Activated naive CD4-positive, alpha-beta T cell treated with anti-CD3 and anti-CD28 coated beads for 36 hours (primary cell): ENCODE measurements at regions of chr12 and their contacts with region 1.

Region 1: GRCh38 chr12:27179400-27180214 is 64.5 kb upstream of the STK38L start:
- DNase-seq: peak; percentile 69
- H3K4me3 Mint-ChIP-seq: no peak overlapping the region
- H3K27ac Mint-ChIP-seq: peak overlapping the region; percentile 76
- H3K4me1 Mint-ChIP-seq: peaks cover 38% of the 10 kb centered on the region
- H3K27me3 Mint-ChIP-seq: peaks cover 2% of the 10 kb centered on the region

Region 2: DNA sequence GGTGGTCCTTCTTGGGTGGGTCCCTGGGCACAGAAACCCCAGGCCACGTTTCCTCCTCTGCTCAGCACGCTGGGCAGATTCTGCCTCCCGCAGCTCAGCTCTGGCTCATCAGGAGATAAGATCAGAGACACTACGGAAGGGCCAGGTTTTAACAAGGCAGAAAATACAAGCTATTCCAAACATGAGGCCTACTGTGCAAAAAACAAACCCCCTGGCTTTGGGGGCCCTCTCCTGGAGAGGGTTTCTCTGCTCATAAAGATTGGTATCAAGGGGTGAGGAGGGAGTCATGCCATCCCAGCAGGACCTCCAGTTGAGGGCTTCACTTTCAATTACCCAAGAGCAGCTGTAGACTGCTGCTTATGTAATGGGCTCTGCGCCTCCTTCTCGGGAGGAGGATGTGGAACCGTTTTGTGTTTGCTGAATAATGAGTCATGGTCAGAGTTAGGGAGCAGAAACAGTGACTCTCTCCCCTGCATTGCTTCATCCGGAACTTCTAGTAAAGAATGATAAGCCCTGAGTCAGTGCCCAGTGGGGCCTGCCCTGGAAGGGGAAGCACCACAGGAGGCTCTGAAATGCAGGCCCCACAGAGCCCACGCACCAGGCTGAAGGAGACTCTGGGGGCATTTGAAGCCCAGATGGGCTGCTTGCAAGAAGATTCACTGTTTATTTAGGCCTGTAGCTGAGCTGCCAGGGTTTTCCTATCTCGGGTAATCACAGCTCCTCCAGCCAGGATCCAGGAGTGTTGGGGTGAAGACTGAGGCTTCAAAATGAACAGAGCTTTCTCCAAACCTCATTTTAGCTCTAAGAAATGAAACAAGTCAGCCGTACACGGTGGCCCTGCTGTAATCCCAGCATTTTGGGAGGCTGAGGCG is 904.9 kb before region 1 on chr12:
- CTCF ChIA-PET with region 1: no interaction called
- intact Hi-C with region 1: loop called (anchors 10 kb)
- DNase-seq: peak; percentile 76
- H3K4me3 Mint-ChIP-seq: no peak overlapping the region
- H3K27ac Mint-ChIP-seq: no peak overlapping the region
- H3K4me1 Mint-ChIP-seq: peaks cover 8% of the 10 kb centered on the region
- H3K27me3 Mint-ChIP-seq: no peaks in the 10 kb centered on the region

Region 3: DNA sequence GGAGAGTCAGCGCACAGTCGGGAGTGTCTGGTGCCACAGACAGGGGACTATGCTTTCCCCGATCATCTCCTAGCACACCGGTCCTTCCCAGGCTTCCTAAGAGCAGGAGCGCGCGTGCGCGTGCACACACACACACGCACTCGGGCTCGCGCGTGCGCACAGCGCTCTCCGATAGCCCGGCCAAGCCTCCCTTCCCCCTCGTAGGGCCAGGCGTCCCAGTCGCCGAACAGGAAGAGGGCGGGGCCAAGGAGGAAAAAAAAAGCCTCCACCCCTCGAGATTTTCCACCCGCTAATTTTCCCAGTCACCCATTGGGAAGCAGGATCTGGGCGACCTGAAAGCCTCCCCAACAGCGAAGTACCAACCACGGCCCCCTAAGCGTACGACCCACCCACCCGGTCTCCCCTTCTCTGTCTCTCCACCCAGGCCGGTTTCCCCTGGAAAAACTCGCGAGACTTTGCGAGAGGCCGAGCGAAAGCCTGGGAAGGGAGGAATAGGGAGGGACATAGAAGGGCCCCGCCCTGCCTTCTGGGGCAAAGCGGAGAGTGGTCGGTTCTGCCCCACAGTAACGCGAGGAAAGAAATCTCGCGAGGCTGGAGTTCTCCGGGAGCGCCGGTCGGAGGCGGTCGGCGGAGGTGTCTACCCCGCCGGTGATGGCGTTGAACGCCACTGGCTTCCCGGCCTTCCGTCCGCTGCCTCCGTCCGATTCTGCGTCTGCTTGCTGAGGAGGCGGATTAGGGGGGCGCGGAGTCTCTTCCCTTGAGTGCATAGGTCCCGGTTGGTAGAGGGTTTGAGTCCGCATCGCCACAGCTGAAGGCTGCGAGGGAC is 241.5 kb before region 1 on chr12 and contains the starts of genes FGFR1OP2 and INTS13:
- CTCF ChIA-PET with region 1: no interaction called
- intact Hi-C with region 1: loop called (anchors 1 kb)
- DNase-seq: peak; percentile 99
- H3K4me3 Mint-ChIP-seq: peak within 1 kb of the TSS; percentile 93
- H3K27ac Mint-ChIP-seq: peak within 1 kb of the TSS; percentile 98
- H3K4me1 Mint-ChIP-seq: peaks cover 52% of the 10 kb centered on the region
- H3K27me3 Mint-ChIP-seq: no peaks in the 10 kb centered on the region
- total RNA-seq, gene FGFR1OP2: 37.0 to 38.4 TPM
- total RNA-seq, gene INTS13: 39.6 to 42.0 TPM

Region 4: DNA sequence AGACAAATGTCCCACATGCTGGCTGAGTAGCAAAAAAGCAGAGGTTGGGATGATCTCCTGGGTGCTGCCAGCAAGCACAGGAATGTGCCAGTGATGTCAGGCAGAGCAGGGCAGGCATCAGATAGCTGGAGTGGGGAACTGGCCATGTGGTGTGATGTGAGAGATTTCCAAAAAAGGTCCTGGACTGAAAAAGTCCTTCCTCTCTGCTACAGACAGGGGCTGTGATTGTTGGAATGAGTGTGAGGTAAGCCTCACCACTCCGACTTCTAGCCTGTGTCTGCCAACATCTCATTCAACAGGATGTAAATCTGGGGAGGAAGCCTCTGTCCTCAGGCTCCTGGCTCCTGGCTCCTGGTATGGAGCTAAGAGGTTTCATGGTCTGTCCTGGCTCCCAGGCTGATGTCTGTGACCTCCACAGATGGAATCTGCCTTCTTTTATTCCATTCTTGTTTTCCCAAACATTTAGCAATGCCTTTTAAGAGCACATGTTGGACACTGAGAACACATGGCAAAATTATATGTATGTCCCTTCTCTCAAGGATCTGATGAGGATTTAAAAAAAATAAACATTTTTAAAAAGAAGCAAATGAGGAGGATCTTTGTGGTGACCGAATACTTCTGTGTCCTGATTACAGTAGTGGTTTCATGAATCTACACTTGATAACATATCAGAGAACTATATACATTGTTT is 14.4 kb after region 1 on chr12:
- CTCF ChIA-PET with region 1: no interaction called
- intact Hi-C with region 1: no loop called
- DNase-seq: no peak
- H3K4me3 Mint-ChIP-seq: no peak overlapping the region
- H3K27ac Mint-ChIP-seq: no peak overlapping the region
- H3K4me1 Mint-ChIP-seq: no peaks in the 10 kb centered on the region
- H3K27me3 Mint-ChIP-seq: no peaks in the 10 kb centered on the region

Region 5: GRCh38 chr12:27207615-27208413 is 28.2 kb after region 1 on chr12:
- CTCF ChIA-PET with region 1: interaction called, 4 read pairs
- intact Hi-C with region 1: loop called (anchors 1 kb)
- DNase-seq: peak; percentile 74
- H3K4me3 Mint-ChIP-seq: no peak overlapping the region
- H3K27ac Mint-ChIP-seq: peak overlapping the region; percentile 38
- H3K4me1 Mint-ChIP-seq: peaks cover 19% of the 10 kb centered on the region
- H3K27me3 Mint-ChIP-seq: no peaks in the 10 kb centered on the region

Region 6: GRCh38 chr12:27237790-27238771 is 58.5 kb after region 1 on chr12:
- CTCF ChIA-PET with region 1: interaction called, 5 read pairs
- intact Hi-C with region 1: loop called (anchors 1 kb)
- DNase-seq: peak; percentile 16
- H3K4me3 Mint-ChIP-seq: peak overlapping the region; percentile 13
- H3K27ac Mint-ChIP-seq: peak overlapping the region; percentile 64
- H3K4me1 Mint-ChIP-seq: peaks cover 33% of the 10 kb centered on the region
- H3K27me3 Mint-ChIP-seq: no peaks in the 10 kb centered on the region

Region 7: DNA sequence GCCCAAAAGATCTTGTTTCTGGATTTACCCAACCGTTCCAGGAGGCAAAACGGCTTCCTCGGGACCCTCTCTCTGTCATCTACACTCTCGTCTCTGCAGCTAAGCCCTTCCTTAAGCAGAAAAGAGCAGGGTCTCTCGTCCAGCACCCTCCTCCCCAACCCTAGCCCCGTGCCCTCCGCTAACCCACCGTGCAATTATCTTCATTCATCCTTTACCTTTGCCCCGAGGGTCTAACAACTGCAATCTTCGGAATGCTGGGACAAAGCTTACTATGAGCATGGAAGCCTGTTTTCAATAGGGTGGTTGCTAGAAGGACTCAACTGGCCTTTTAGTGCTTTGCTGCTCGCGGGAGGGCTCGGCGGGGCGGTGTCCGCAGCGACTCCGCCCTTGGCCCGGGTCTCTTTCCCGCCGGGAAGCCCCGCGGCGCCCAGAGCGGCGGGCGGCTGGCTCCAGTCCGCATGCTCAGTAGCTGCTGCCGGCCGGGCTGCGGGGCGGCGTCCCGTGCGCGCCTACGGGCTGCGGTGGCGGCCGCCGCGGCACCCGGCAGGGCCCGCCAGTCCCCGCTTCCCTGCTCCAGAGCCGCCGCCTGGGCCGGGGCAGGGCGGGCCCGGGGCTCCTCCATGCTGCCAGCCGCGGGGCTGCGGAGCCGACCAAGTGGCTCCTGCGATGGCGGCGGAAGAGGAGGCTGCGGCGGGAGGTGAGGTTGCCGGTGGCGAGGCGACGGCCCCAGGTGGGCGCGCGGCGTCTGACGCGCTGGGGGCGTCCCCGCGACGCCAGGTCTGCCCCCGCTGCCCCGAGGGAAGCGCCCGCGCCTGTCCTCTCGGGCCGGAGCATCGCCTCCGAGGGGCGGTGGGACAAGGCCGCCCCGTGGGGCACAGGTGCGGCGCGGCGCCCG is 153.0 kb after region 1 on chr12 and contains the start of gene BMAL2:
- CTCF ChIA-PET with region 1: no interaction called
- intact Hi-C with region 1: loop called (anchors 1 kb)
- DNase-seq: peak; percentile 44
- H3K4me3 Mint-ChIP-seq: peak within 1 kb of the TSS; percentile 90
- H3K27ac Mint-ChIP-seq: peak within 1 kb of the TSS; percentile 74
- H3K4me1 Mint-ChIP-seq: peaks cover 34% of the 10 kb centered on the region
- H3K27me3 Mint-ChIP-seq: peaks cover 30% of the 10 kb centered on the region
- total RNA-seq, gene BMAL2: 7.9 to 9.2 TPM